Heart left ventricle (tissue), 16 donors: ENCODE measurements at regions of chr4 and their contacts with region 1.

Region 1: DNA sequence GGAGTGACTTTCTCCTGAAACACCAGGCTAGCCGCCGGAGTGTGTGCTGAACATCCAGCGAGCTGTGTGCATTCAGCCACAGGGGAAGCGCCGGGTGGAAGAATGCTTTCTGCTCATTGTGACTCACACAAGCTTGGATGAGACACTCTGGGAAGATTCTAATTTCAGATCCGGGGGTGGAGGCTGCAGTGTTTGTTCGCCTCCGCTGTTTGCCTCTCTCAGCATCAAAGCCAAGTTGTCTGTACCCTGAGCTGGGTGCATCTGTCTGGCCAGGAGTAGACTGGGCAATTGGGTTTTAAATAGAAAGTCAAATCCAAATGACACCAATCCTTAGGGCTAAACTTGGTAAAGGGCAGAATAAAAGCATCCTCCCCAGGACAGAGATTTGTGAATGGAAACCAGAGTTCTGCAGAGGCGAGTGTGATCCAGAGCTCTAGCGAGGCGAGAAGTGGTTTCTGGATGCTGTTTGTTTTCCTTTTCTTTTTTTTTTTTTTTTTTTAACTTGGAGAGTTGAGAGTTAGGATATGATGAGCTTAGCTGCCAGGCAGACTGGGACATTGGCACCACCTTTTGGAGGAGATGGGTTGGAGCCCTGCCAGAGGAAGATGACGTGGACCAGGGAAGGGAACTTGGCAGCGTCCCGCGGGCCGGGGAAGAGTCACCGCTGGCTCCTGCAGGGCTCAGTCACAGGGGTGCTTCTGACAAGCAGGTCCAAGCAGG is 196.0 kb upstream of the PSAPL1 start:
- DNase-seq: peak; percentile 78 to 88 (median 81)
- ATAC-seq: peak; percentile 63 to 87 (median 83)
- H3K4me3 ChIP-seq: peak overlapping the region in 1 of 12 donors; percentile 5
- H3K27ac ChIP-seq: peak overlapping the region in 8 of 12 donors; percentile 10 to 54 (median 22)
- H3K4me1 ChIP-seq: peaks cover 0 to 30% (median 14%) of the 10 kb centered on the region in 12 donors
- H3K27me3 ChIP-seq: peaks cover 0 to 20% (median 4%) of the 10 kb centered on the region in 9 donors
- CTCF ChIP-seq: no peak
- POLR2A ChIP-seq: no peak

Region 2: DNA sequence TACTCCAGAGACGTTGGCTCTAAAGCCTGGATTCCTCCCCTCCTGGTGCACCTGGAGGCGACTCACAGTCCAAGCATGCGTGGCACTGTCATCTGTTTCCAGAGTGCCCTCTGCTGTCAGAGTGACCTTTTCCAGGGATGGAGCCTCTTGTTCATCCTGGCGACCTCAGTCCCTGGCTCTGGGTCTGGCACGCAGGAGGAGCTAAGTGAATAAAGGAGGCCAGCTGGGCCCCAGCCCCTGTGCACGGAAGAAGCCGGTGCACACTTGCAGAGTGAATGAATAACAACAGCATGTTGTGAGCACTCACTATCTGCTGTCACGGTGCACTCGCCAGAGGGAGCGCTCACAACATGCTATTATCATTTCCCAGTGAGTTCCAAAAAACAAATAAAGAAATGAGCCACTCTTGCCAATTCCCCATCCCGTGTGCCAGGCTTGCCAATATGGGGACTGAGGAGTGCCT is 168.2 kb before region 1 on chr4:
- intact Hi-C with region 1: loop called in 1 of 10 experiments (anchors 5 kb)
- DNase-seq: peak in 3 of 5 donors; percentile 31 to 62 (median 45)
- ATAC-seq: peak; percentile 47 to 80 (median 69)
- H3K4me3 ChIP-seq: no peak overlapping the region
- H3K27ac ChIP-seq: peak overlapping the region in 1 of 12 donors; percentile 8
- H3K4me1 ChIP-seq: peaks cover 0 to 11% (median 0%) of the 10 kb centered on the region in 12 donors
- H3K27me3 ChIP-seq: peaks cover 0 to 12% (median 0%) of the 10 kb centered on the region in 9 donors
- CTCF ChIP-seq: peak in 10 of 12 donors; percentile 7 to 58 (median 42)
- POLR2A ChIP-seq: no peak

Region 3: DNA sequence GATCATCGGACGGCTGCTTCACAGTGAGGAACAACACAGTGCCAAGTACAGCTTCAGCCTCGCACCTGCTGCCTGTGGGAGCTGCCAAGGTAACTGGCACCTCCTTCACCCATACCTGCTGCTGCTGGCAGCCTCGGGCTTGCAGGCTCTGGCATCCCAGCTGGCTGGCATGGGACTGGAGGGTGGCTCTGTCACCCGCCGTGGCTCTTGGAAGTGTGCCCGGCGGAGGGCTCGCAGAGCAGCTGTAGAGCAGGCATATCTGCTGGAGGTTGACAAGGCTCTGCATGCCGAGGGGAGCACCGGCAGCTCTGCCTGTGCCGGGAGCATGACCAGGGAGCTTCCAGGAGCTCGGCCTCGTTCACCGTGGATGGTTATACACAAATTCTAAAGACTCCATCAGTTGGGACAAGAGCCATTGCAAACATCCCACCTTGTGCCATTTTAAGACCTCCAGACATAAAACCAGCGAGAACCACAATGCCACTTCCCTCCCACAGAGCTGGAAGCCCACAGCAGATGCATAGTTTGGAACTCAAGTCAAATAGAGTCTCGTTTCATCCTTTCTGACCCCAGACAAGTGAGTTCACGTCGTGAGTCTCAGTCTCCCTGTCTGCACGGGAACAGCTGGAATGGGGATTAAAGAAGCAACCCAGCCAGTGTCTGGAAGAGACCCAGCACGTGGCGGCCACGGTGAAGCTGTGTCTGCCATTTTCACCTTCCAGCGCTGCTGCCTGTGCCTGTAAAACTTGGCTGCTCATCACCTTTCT is 111.7 kb before region 1 on chr4:
- intact Hi-C with region 1: loop called in 1 of 10 experiments (anchors 5 kb)
- DNase-seq: peak; percentile 67 to 83 (median 72)
- ATAC-seq: peak; percentile 66 to 87 (median 80)
- H3K4me3 ChIP-seq: no peak overlapping the region
- H3K27ac ChIP-seq: peak overlapping the region in 1 of 12 donors; percentile 2
- H3K4me1 ChIP-seq: peaks cover 0 to 38% (median 5%) of the 10 kb centered on the region in 12 donors
- H3K27me3 ChIP-seq: peaks cover 0 to 32% (median 0%) of the 10 kb centered on the region in 9 donors
- CTCF ChIP-seq: no peak
- POLR2A ChIP-seq: no peak